Aorta (tissue), 5 donors: ENCODE measurements at regions of chr2 and their contacts with region 1.

Region 1: DNA sequence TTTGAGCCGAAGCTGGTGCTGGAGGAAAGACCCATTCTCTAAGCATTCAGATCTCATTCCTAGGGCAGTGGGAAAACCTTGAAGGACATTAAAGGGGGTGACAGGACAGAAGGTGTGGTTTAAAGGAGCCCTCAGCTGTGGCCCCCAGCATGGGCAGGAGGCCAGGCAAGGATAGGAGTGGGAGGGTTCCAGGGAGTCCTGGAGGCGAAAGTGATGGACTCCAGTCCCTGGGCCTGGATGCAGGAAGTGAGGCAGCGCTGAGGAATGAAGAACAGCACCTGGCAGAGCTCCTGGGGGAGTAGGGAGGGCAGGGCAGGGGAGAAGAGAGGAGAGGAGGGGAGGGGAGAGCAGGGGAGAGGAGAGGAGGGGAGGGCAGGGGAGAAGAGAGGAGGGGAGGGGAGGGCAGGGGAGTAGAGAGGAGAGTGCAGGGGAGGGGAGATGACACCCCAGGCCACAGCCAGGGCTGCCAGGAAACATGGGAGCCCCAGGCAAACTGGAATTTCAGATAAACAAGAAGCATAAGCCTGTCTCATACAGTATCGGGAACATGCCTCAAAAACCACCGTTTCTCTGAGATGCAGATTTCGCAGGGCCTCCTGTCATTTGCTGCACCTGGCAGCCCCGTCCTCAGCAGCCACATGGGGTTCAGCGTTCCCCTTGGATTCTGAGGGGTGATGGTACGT is 5.7 kb downstream of the RAMP1 start:
- DNase-seq: peak; percentile 74 to 85
- ATAC-seq: peak; percentile 43
- H3K4me3 ChIP-seq: no peak overlapping the region
- H3K27ac ChIP-seq: peak overlapping the region; percentile 89 to 99
- H3K4me1 ChIP-seq: peaks cover 2 to 3% of the 10 kb centered on the region in 2 donors
- H3K27me3 ChIP-seq: no peaks in the 10 kb centered on the region

Region 2: DNA sequence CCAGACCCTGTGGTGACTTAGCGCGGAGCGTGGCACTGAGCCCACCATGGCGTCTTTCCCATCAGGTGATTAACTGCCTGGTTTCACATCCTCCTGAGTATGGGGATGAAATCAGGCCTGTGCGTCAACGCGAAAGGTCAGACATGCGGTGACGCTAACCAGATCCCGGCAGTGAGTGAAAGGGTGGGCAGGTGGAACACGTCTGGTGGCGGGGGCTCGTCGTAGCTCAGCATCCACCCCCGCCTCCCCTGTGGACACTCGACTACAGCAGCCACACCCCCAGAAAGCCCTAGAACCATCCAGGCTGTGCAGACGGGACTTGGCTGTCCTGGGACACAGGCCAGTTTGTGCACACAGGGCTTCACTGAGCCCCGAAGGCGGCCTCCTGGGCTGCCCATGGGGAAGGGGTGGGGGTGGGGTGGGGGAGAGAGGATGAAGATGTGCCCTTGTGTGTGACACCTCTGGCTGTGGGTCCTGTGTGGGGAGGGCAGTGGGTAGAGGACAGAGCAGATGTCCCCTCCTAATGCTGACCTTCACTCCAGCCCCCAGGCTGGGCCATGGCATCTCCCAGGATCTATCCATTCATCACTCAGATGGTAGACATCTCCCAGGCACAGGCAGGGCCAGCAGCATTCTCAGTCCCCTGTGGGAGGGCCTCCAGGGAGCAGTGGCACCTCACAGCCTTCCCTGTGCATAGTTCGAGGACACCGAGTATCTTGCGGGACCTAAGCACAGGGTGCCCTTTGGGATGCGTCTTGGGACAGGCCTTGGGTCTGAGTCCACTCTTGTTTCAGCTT is 21.8 kb after region 1 on chr2:
- intact Hi-C with region 1: loop called in 1 of 2 experiments (anchors 2 kb)
- DNase-seq: peak; percentile 75 to 80
- ATAC-seq: peak; percentile 39
- H3K4me3 ChIP-seq: no peak overlapping the region
- H3K27ac ChIP-seq: peak overlapping the region; percentile 77 to 98
- H3K4me1 ChIP-seq: no peaks in the 10 kb centered on the region
- H3K27me3 ChIP-seq: no peaks in the 10 kb centered on the region

Region 3: DNA sequence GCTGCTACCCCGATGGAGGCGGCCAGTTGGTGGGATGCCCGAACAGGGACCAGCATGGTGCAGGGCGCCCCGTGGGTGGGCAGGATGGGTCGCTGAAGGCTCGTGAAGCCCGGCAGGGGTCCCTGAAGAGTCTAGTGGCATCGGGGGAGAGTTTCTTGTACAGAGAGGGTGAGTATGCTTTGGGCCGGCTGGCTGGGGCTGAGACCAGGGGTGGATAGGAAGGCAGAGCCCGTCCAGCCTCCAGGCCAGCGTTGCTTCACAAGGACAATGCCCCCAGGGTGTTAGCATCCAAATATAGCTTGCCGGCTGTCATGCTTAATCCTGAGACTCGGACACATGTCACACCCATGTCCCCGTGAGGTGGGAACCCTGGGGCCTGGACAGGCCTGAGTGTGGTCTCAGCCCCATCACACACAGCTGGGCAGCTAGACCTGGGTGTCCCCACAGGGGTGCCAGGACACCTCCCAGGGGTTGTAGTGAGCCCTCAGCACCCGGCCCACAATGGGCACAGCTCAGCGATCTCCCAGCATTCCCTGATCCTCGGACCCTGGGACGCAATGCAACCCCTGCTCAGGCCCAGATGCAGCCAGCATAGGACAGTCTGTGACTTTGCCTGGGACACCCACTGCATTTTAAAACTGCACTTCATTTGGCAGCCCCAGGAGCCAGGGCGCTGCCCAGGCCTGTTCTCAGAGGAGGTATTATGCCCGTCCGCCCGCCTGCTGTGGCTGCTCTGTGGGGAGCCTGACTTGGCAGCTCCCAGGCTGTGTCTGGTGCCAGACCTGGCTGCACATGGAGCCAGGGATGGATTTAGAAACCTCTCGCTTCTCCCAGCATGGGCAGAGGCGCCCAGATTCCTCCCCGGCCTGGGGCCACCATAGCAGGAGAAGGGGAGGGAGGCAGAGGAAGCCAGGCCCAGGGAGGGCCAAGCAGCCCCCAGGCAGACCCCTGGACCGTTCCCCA is 30.7 kb after region 1 on chr2:
- intact Hi-C with region 1: loop called (anchors 2 to 5 kb)
- DNase-seq: peak; percentile 87 to 89
- ATAC-seq: peak; percentile 89
- H3K4me3 ChIP-seq: no peak overlapping the region
- H3K27ac ChIP-seq: peak overlapping the region; percentile 85 to 95
- H3K4me1 ChIP-seq: peaks cover 0 to 5% of the 10 kb centered on the region in 2 donors
- H3K27me3 ChIP-seq: no peaks in the 10 kb centered on the region